Activated CD4-positive, alpha-beta T cell treated with anti-CD3 and anti-CD28 coated beads for 36 hours (primary cell): ENCODE measurements at regions of chr1 and their contacts with region 1.

Region 1: DNA sequence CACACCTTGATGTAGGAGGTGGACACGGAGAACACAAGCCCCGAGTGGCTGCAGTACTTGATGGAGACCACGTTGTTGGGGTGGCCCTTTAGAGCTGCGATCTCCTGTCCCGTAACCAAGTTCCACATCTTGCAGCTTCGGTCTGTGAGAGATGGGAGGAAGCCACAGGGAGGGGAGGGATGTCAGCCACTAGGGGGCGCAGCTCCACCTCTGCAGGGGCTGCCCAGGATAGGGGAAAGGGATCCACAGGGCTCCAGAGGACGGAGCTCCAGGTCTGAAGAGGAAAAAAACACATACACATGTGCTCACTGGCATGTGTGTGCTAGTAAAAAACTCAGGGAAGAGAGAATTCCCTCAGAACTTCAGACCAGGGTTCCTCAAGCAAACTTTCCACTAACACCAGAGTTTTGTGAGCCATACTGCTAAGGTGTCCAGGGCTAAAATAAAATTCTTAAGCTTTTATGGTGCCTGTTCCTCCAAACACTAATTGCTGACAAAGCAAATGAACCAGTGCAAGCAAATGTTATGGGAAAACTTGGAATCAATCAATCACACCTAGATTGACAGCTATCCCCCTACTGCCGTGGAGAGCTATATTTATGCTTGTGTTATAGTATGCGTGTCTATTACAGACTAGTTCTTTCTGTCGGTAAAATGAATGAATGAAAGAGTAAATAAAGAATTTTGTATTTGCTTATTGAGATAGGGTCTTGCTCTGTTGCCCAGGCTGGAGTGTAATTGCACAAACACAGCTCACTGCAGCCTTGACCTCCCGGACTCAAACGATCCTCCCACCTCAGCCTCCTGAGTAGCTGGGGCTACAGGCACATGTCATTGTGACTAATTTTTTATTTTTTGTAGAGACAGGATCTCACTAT is 43.7 kb downstream of the KIF21B start:
- DNase-seq: peak; percentile 86
- ATAC-seq: peak; percentile 69
- H3K4me3 Mint-ChIP-seq: no peak overlapping the region
- H3K27ac Mint-ChIP-seq: no peak overlapping the region
- H3K4me1 Mint-ChIP-seq: no peaks in the 10 kb centered on the region
- H3K27me3 Mint-ChIP-seq: no peaks in the 10 kb centered on the region

Region 2: DNA sequence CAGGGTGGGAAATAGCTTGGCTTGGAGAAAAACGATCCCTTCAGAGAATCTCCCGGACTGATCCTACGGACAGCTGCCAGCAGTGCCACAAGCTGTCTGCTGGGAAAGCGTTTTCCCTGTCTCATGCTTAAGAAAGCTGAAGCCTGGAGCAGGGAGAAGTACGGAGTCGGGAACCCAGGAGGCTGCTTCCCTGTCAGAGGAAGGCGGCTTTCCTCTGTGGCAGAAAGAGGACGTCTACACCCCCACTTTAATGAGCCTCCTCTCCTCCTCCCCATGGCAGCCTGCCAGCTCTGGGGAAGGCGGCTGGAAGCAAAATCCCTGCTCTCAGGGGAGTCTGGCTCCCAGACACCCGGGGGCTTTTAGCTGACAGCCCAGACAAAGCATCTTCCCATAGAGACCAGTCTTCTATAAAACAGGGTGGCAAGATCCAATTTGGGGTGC is 36.4 kb after region 1 on chr1:
- CTCF ChIA-PET with region 1: interaction called, 23 read pairs
- POLR2A ChIA-PET with region 1: no interaction called
- intact Hi-C with region 1: no loop called
- DNase-seq: no peak
- ATAC-seq: no peak
- H3K4me3 Mint-ChIP-seq: peak overlapping the region; percentile 51
- H3K27ac Mint-ChIP-seq: peak overlapping the region; percentile 99
- H3K4me1 Mint-ChIP-seq: peaks cover 94% of the 10 kb centered on the region
- H3K27me3 Mint-ChIP-seq: no peaks in the 10 kb centered on the region

Region 3: DNA sequence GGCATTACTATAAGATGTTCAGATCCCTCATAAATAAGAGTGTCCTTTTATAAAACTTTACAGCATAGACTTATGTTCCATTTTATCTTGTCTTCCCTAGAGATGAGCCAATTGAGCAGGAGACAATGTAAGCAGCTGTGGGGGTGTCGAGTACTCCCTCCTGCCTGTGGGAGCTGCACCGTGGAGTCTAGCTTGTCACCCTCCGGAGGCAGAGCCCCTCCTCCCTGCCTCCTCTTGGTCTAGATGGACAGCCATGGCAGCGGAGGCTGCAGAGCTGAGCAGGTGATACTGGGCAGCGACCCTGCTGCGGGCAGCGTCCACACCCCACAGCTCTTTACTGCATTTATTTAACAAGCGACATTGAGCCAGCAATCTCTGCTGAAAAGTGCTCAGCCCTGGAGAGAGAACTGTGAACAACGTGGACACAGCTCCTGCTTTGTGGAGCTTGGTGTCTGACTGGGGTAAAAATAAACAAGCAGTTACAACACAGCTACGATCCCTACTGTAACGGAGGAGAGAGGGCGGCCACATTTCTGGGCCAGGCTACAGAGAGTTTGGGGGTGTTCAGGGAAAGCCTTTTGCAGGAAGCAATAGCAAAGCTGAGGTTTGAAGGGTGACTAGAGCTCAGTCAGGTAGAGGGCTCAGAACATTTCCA is 56.5 kb after region 1 on chr1:
- CTCF ChIA-PET with region 1: interaction called, 66 read pairs
- POLR2A ChIA-PET with region 1: no interaction called
- intact Hi-C with region 1: no loop called
- DNase-seq: no peak
- ATAC-seq: no peak
- H3K4me3 Mint-ChIP-seq: no peak overlapping the region
- H3K27ac Mint-ChIP-seq: no peak overlapping the region
- H3K4me1 Mint-ChIP-seq: no peaks in the 10 kb centered on the region
- H3K27me3 Mint-ChIP-seq: no peaks in the 10 kb centered on the region

Region 4: DNA sequence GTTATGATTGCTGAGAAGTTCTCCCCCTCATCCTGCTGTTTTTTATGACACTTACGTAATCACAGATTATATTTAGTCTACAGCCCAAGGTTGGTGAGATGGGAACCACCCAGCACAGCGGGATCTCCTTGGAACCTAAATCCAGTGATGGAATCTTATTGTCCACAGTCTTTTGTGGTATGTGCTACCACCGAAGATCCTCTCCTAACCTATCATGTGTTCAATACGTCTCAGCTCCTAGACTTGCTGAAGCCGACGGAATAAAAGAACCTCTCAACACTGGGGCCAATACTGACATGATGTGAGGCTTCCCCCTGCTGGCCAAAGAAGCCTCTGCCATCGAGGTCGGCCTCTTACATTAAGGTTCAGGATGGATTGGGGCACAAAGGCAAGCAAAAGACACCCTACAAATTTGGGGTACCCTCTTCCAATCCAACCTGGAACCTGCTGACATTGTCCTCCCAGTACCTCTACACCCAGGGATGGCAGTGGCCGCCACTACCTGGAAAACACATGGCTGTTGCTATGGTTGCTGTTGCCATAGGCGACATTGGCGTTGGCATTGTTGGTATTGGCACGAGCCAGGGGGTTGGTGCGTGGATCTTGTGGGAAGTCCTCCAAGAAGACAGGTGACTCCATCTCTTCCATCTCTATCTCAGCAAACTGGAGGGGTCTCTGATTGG is 63.1 kb after region 1 on chr1:
- CTCF ChIA-PET with region 1: interaction called, 66 read pairs
- POLR2A ChIA-PET with region 1: no interaction called
- intact Hi-C with region 1: loop called (anchors 1 kb)
- DNase-seq: peak; percentile 85
- ATAC-seq: peak; percentile 96
- H3K4me3 Mint-ChIP-seq: no peak overlapping the region
- H3K27ac Mint-ChIP-seq: no peak overlapping the region
- H3K4me1 Mint-ChIP-seq: no peaks in the 10 kb centered on the region
- H3K27me3 Mint-ChIP-seq: no peaks in the 10 kb centered on the region

Region 5: GRCh38 chr1:201119206-201120197 is 139.7 kb after region 1 on chr1:
- CTCF ChIA-PET with region 1: interaction called, 19 read pairs
- POLR2A ChIA-PET with region 1: no interaction called
- intact Hi-C with region 1: no loop called
- DNase-seq: peak; percentile 82
- ATAC-seq: peak; percentile 66
- H3K4me3 Mint-ChIP-seq: no peak overlapping the region
- H3K27ac Mint-ChIP-seq: no peak overlapping the region
- H3K4me1 Mint-ChIP-seq: peaks cover 4% of the 10 kb centered on the region
- H3K27me3 Mint-ChIP-seq: no peaks in the 10 kb centered on the region

Region 6: DNA sequence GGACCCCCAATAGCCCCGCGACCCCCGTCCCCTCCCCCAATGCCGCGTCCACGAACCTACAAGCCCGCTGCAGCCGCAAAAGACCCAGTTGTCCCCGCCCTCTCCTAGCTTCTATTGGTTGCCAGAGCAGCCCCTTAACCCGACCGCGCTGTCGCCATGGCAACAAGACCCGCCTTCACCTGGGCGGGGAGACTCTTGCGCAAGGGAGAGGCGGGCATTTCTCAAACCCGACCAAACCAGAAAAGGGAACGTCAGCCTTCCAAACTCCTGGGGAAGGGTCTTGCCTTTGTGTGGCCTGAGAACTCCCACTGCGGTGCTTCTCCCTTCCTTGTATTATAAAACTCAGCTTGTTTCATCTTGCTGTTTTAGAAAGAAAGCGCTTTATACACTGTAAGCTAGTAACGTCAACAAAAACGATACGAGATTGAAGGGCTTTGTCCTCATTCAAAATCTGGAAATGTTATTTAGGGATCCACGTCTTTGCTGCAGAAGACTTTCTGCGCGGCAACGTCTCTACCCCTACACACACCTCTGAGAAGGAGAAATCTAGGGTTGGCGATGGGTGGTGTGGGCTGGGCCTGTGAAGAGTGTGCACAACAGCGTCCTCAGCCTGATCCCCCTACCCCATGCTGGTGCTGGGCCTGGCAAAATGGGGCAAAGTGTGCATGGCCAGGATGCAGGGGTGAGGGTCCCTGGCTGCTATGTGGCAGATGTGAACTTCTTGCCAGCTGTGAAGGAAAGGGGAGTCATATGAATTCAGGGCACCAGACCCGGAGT is 174.8 kb after region 1 on chr1 and contains the start of gene TMEM9:
- CTCF ChIA-PET with region 1: no interaction called
- POLR2A ChIA-PET with region 1: no interaction called
- intact Hi-C with region 1: no loop called
- DNase-seq: peak; percentile 99
- ATAC-seq: peak; percentile 96
- H3K4me3 Mint-ChIP-seq: peak within 1 kb of the TSS; percentile 78
- H3K27ac Mint-ChIP-seq: peak within 1 kb of the TSS; percentile 85
- H3K4me1 Mint-ChIP-seq: peaks cover 18% of the 10 kb centered on the region
- H3K27me3 Mint-ChIP-seq: peaks cover 4% of the 10 kb centered on the region
- total RNA-seq, gene TMEM9: 15.7 to 27.2 TPM